ENCODE measurements at regions of chr19 and their contacts with region 1.

Region 1: GRCh38 chr19:12965017-12965811 is 4.2 kb upstream of the DAND5 start:
- DNase-seq: peak; percentile 89
- ATAC-seq: peak; percentile 96
- H3K4me3 ChIP-seq: peak overlapping the region in 4 of 5 experiments; percentile 30 to 65 (median 58)
- H3K4me3 Mint-ChIP-seq: peak overlapping the region; percentile 98
- H3K27ac ChIP-seq: no peak overlapping the region
- H3K27ac Mint-ChIP-seq: peak overlapping the region; percentile 89
- H3K4me1 ChIP-seq: peaks cover 4 to 10% of the 10 kb centered on the region in 2 donors
- H3K4me1 Mint-ChIP-seq: peaks cover 6% of the 10 kb centered on the region
- H3K27me3 ChIP-seq: no peaks in the 10 kb centered on the region
- H3K27me3 Mint-ChIP-seq: peaks cover under 1% of the 10 kb centered on the region
- CTCF ChIP-seq: peak; percentile 92

Region 2: DNA sequence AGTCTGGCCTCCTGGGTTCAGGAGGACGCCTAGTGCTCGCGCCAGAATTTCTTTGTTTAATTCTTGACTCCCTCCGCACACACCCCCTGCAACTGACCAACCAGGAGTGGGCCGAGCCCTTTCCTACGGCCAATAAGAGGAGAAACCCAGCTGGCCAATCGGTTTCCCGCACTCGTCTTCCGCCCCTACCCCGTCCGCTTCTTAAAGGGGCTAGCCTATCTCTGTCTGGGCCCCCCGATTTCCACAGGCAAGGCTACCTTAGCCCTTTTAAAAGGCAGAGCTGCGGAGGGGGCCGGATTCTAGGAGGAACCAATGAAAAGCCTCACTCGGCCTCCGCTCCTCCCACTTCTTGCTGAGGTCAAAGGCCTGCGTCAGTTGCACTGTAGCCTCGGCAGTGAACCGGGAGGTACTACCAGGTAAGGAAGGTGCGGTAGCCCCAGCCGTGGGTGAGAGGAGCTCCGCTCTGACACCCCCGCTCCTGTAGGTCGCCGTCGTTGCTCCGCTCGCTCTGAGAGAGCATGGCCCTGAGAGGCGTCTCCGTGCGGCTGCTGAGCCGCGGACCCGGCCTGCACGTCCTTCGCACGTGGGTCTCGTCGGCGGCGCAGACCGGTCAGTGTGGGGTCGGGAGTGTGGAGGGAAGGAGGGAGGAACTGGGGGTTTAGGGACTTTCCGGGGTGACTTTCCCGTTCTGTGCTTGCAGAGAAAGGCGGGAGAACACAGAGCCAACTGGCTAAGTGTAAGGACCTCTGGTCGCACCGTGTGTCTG is 74.2 kb before region 1 on chr19 and contains the start of gene GCDH:
- CTCF ChIA-PET with region 1: interaction called, 58 read pairs
- POLR2A ChIA-PET with region 1: no interaction called
- intact Hi-C with region 1: loop called (anchors 1 kb)
- DNase-seq: peak; percentile 98
- ATAC-seq: peak; percentile 91
- H3K4me3 ChIP-seq: peak within 1 kb of the TSS; percentile 51 to 92 (median 78)
- H3K4me3 Mint-ChIP-seq: peak within 1 kb of the TSS; percentile 99
- H3K27ac ChIP-seq: peak within 1 kb of the TSS; percentile 80 to 83
- H3K27ac Mint-ChIP-seq: peak within 1 kb of the TSS; percentile 95
- H3K4me1 ChIP-seq: peaks cover 15 to 20% of the 10 kb centered on the region in 2 donors
- H3K4me1 Mint-ChIP-seq: peaks cover 31% of the 10 kb centered on the region
- H3K27me3 ChIP-seq: no peaks in the 10 kb centered on the region
- H3K27me3 Mint-ChIP-seq: no peaks in the 10 kb centered on the region
- CTCF ChIP-seq: no peak
- total RNA-seq, gene GCDH: 61.2 and 63.2 TPM in 2 replicates

Region 3: DNA sequence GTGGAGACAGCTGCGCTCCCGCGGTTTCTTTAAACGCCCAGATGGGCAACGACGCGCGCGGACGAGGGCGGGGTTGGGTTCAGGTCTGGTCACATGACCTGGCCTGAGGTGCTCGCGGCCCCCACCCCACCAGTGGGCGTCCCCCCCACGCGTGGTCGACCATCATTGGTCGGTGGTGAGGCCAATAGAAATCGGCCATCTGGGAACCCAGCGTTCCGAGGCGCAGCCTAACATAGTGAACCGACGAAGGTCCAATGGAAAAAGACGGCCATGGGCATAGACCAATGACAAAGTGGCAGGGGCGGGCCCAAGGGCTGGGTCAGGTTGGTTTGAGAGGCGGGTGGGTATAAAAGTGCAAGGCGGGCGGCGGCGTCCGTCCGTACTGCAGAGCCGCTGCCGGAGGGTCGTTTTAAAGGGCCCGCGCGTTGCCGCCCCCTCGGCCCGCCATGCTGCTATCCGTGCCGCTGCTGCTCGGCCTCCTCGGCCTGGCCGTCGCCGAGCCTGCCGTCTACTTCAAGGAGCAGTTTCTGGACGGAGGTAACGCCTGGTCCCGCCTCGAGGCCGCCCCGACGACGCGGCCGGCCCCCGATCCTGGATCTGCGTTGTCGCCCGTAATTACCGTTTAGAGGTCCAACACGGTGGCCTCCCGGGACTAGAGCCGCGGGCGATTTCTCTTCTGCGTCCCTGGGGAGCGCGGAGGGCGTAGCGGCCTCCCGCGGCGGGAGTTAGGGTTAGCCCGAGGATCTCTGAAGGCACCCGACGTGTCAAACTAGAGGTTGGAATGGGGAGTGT is 26.8 kb before region 1 on chr19 and contains the start of gene CALR:
- CTCF ChIA-PET with region 1: interaction called, 11 read pairs
- POLR2A ChIA-PET with region 1: interaction called, 3 read pairs
- intact Hi-C with region 1: loop called (anchors 1 kb)
- DNase-seq: peak; percentile 100
- ATAC-seq: peak; percentile 86
- H3K4me3 ChIP-seq: peak within 1 kb of the TSS; percentile 77 to 95 (median 93)
- H3K4me3 Mint-ChIP-seq: peak within 1 kb of the TSS; percentile 98
- H3K27ac ChIP-seq: peak within 1 kb of the TSS; percentile 79 to 97
- H3K27ac Mint-ChIP-seq: peak within 1 kb of the TSS; percentile 96
- H3K4me1 ChIP-seq: peaks cover 38 to 61% of the 10 kb centered on the region in 2 donors
- H3K4me1 Mint-ChIP-seq: peaks cover 57% of the 10 kb centered on the region
- H3K27me3 ChIP-seq: no peaks in the 10 kb centered on the region
- H3K27me3 Mint-ChIP-seq: no peaks in the 10 kb centered on the region
- CTCF ChIP-seq: peak; percentile 20
- total RNA-seq, gene CALR: 214 and 237 TPM in 2 replicates

Region 4: GRCh38 chr19:13060964-13061927 is 96.0 kb after region 1 on chr19:
- CTCF ChIA-PET with region 1: interaction called, 24 read pairs
- POLR2A ChIA-PET with region 1: no interaction called
- intact Hi-C with region 1: no loop called
- DNase-seq: peak; percentile 86
- ATAC-seq: peak; percentile 97
- H3K4me3 ChIP-seq: peak overlapping the region; percentile 4 to 60 (median 57)
- H3K4me3 Mint-ChIP-seq: peak overlapping the region; percentile 88
- H3K27ac ChIP-seq: no peak overlapping the region
- H3K27ac Mint-ChIP-seq: peak overlapping the region; percentile 32
- H3K4me1 ChIP-seq: peaks cover 7 to 17% of the 10 kb centered on the region in 2 donors
- H3K4me1 Mint-ChIP-seq: peaks cover 6% of the 10 kb centered on the region
- H3K27me3 ChIP-seq: peaks cover 0 to 22% (median 12%) of the 10 kb centered on the region in 4 experiments
- H3K27me3 Mint-ChIP-seq: peaks cover 21% of the 10 kb centered on the region
- CTCF ChIP-seq: peak; percentile 99

Measured in B cell (primary cell).